ENCODE measurements at regions of chr19 and their contacts with region 1.

Region 1: DNA sequence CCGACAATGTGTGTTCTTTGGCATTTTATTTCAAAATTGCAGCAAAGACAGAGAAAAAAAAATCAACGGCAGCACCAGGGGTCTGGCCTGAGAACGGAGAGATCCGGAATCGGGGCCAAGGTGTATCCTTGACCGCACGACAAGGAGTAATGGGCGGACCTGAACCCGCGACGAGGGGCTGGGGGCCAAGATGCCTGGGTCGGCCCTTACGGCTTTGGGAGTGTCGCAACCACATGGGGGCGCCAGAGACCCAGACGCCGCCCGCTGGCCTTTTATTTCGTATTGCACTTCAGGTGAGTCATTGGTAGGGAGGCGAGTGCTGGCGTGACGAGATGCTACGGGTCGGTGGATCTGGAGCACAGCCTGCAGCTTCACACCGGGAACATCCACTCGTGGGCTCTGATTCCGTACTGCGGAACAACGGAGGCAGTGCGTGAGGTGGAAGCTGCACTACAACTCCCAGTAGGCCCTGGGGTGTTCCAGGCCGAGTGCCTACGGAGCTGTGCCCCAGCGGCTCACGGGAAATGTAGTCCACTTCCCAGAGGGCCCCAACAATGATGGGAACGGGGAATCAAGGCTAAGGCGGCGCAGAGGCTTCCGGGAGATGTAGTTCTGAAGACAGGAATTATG is 15.7 kb downstream of the BCAT2 start:
- DNase-seq: peak; percentile 96
- H3K4me3 ChIP-seq: peak overlapping the region; percentile 55 to 68
- H3K27ac ChIP-seq: peak overlapping the region; percentile 56 to 70; a peak in 3 of 4 replicates
- H3K4me1 ChIP-seq: peaks cover 5% of the 10 kb centered on the region in 2 experiments; a peak in 1 of 4 replicates
- H3K27me3 ChIP-seq: no peaks in the 10 kb centered on the region
- CTCF ChIP-seq: peak; percentile 98
- EP300 ChIP-seq: no peak
- RAD21 ChIP-seq: peak; percentile 74

Region 2: GRCh38 chr19:48674921-48675824 is 120.0 kb before region 1 on chr19:
- CTCF ChIA-PET with region 1: interaction called, 13 read pairs
- POLR2A ChIA-PET with region 1: no interaction called
- DNase-seq: peak; percentile 96
- H3K4me3 ChIP-seq: no peak overlapping the region
- H3K27ac ChIP-seq: peak overlapping the region in 1 of 2 experiments; percentile 1; a peak in 1 of 4 replicates
- H3K4me1 ChIP-seq: peaks cover 0 to 8% of the 10 kb centered on the region in 2 experiments; a peak in 1 of 4 replicates
- H3K27me3 ChIP-seq: no peaks in the 10 kb centered on the region
- CTCF ChIP-seq: peak; percentile 82
- EP300 ChIP-seq: no peak
- RAD21 ChIP-seq: peak; percentile 79

Region 3: GRCh38 chr19:48713864-48714758 is 81.1 kb before region 1 on chr19:
- CTCF ChIA-PET with region 1: no interaction called
- POLR2A ChIA-PET with region 1: no interaction called
- DNase-seq: peak; percentile 98
- H3K4me3 ChIP-seq: peak overlapping the region; percentile 75 to 100
- H3K27ac ChIP-seq: peak overlapping the region; percentile 77 to 85
- H3K4me1 ChIP-seq: peaks cover 8 to 30% of the 10 kb centered on the region in 2 experiments; a peak in 2 of 4 replicates
- H3K27me3 ChIP-seq: no peaks in the 10 kb centered on the region
- CTCF ChIP-seq: no peak
- EP300 ChIP-seq: no peak
- RAD21 ChIP-seq: no peak; the same call in 1 of the 2 replicates

Region 4: DNA sequence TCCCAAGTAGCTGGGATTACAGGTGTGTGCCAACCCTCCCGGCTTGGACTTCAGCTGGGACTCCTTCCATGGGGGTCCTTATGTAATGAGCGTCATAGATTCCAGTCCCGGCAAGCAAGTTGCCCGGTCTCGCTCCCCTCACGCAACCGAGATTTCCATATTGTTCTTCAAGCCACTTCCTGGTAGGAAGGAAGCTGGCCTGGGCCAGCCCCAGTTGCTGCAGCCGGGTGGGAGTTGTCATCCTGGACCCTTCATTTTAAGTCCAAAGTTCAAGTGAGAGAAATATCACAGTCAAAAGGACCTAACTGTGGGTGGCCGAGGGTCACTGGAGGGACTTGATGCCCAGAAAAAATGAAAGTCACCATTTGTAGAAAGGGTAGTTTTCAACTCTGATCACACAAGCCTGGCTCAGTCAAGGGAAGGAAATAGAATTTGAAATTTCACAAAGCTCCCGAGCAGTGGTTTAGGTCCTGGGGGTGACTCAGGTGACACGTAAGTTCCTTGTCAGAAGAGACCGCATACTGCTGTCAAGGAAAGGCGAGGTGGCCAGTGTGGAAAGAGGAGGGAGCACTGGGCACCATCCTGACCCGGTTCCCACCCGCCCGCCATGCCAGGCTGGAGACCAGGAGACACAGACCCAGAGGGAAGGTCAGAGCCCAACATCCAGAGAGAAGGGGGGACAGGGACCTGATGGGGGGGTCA is 34.5 kb before region 1 on chr19:
- CTCF ChIA-PET with region 1: no interaction called
- POLR2A ChIA-PET with region 1: no interaction called
- DNase-seq: no peak
- H3K4me3 ChIP-seq: no peak overlapping the region
- H3K27ac ChIP-seq: no peak overlapping the region
- H3K4me1 ChIP-seq: no peaks in the 10 kb centered on the region
- H3K27me3 ChIP-seq: peaks cover 34% of the 10 kb centered on the region
- CTCF ChIP-seq: no peak
- EP300 ChIP-seq: no peak
- RAD21 ChIP-seq: no peak

Region 5: GRCh38 chr19:48806518-48806817 is 11.3 kb after region 1 on chr19:
- CTCF ChIA-PET with region 1: interaction called, 59 read pairs
- POLR2A ChIA-PET with region 1: interaction called, 10 read pairs
- DNase-seq: peak; percentile 82
- H3K4me3 ChIP-seq: no peak overlapping the region
- H3K27ac ChIP-seq: no peak overlapping the region
- H3K4me1 ChIP-seq: peaks cover 0 to 9% of the 10 kb centered on the region in 2 experiments; a peak in 2 of 4 replicates
- H3K27me3 ChIP-seq: no peaks in the 10 kb centered on the region
- CTCF ChIP-seq: no peak
- EP300 ChIP-seq: no peak
- RAD21 ChIP-seq: no peak

Region 6: DNA sequence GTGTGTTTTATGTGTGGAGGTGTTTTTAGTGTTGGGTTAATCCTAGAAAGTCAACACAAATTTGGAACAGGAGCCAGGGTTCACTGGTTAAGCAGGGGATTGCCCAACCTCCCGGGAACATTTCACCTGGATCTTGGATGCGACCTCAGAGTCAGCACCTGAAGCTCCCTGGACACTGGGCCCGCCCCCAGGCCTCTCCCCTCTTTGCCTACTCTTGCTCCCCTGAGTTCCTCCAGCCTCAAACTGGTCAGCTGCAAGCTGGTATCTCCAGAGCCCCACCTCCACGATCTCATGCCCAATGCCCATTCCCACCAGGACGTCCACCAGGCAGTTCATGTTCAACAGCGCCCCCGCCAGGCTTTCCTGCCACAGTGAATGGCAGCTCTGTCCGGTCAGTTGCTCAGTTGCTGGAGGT is 31.4 kb after region 1 on chr19:
- CTCF ChIA-PET with region 1: interaction called, 47 read pairs
- POLR2A ChIA-PET with region 1: no interaction called
- DNase-seq: no peak
- H3K4me3 ChIP-seq: no peak overlapping the region
- H3K27ac ChIP-seq: no peak overlapping the region
- H3K4me1 ChIP-seq: no peaks in the 10 kb centered on the region
- H3K27me3 ChIP-seq: no peaks in the 10 kb centered on the region
- CTCF ChIP-seq: 0 out of 2 replicates have a peak, but pooled peaks have one; percentile 24
- EP300 ChIP-seq: no peak
- RAD21 ChIP-seq: no peak

Region 7: DNA sequence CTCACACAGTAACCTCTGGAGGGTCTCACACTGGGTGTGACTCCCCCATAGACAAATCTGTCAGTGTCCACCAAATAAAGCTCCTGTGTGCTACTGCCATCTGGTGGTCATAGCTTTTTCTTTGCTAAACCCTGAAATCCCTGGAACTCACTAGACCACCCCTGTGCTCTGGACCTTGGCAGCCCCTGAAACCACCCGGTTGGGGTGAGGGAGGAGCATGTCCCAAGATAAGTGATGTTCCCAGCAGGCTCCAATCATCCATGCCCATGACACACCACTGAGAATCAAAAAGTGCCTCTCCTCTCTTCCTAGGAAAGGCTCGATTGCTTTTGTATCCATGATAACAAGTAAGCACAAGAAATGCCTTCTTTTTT is 47.6 kb after region 1 on chr19:
- CTCF ChIA-PET with region 1: interaction called, 457 read pairs
- POLR2A ChIA-PET with region 1: interaction called, 4 read pairs
- DNase-seq: peak; percentile 80
- H3K4me3 ChIP-seq: no peak overlapping the region
- H3K27ac ChIP-seq: no peak overlapping the region
- H3K4me1 ChIP-seq: peaks cover 0 to 2% of the 10 kb centered on the region in 2 experiments; a peak in 1 of 4 replicates
- H3K27me3 ChIP-seq: no peaks in the 10 kb centered on the region
- CTCF ChIP-seq: peak; percentile 86
- EP300 ChIP-seq: no peak
- RAD21 ChIP-seq: peak; percentile 75

Measured in SK-N-SH (cell line).